ENCODE measurements at regions of chr21 and their contacts with region 1.

Region 1: DNA sequence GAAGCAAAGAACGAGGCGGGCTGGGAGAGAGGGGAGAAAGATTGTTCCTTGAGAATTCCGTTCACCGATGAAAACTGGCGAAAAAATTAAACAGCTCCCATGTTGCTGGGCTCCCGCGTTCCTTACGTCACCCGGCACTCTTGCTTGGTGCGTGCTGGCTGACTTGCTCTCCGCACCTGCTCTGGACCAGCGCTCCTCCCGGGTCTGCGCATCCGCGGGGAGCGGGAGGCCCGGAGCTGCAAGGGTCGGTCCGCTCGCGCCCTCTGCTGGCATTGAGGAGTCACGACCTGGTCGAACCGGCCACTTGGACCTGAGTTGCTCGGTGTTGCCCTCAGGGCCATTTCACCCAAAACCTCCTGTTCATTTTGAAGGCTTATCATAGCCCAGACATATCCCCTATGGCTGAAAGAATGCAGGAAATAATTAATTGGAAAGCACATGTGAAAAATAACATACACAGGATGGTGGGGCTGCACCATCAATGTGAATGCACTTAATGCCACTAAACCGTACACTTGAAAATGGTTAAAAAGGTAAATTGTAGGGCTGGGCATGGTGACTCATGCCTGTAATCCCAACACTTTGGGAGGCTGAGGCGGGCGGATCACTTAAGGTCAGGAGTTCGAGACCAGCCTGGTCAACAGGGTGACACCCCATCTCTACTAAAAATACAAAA is 98.9 kb upstream of the BACE2 start:
- DNase-seq: peak; percentile 80 to 85 (median 83)
- ATAC-seq: peak; percentile 86
- H3K4me3 ChIP-seq: no peak overlapping the region
- H3K27ac ChIP-seq: no peak overlapping the region
- H3K4me1 ChIP-seq: peaks cover 7% of the 10 kb centered on the region
- H3K27me3 ChIP-seq: no peaks in the 10 kb centered on the region
- CTCF ChIP-seq: peak; percentile 65 to 85 (median 84)
- POLR2A ChIP-seq: no peak

Region 2: GRCh38 chr21:40143822-40144525 is 925.1 kb before region 1 on chr21:
- intact Hi-C with region 1: loop called (anchors 5 kb)
- DNase-seq: peak; percentile 59 to 73 (median 65)
- ATAC-seq: no peak
- H3K4me3 ChIP-seq: no peak overlapping the region
- H3K27ac ChIP-seq: no peak overlapping the region
- H3K4me1 ChIP-seq: no peaks in the 10 kb centered on the region
- H3K27me3 ChIP-seq: no peaks in the 10 kb centered on the region
- CTCF ChIP-seq: peak; percentile 69 to 86 (median 77)
- POLR2A ChIP-seq: no peak

Region 3: GRCh38 chr21:40466893-40467501 is 602.1 kb before region 1 on chr21:
- intact Hi-C with region 1: loop called (anchors 10 kb)
- DNase-seq: peak in 3 of 4 donors; percentile 14 to 43 (median 17)
- ATAC-seq: no peak
- H3K4me3 ChIP-seq: no peak overlapping the region
- H3K27ac ChIP-seq: no peak overlapping the region
- H3K4me1 ChIP-seq: no peaks in the 10 kb centered on the region
- H3K27me3 ChIP-seq: no peaks in the 10 kb centered on the region
- CTCF ChIP-seq: peak; percentile 6 to 70 (median 48)
- POLR2A ChIP-seq: no peak

Region 4: DNA sequence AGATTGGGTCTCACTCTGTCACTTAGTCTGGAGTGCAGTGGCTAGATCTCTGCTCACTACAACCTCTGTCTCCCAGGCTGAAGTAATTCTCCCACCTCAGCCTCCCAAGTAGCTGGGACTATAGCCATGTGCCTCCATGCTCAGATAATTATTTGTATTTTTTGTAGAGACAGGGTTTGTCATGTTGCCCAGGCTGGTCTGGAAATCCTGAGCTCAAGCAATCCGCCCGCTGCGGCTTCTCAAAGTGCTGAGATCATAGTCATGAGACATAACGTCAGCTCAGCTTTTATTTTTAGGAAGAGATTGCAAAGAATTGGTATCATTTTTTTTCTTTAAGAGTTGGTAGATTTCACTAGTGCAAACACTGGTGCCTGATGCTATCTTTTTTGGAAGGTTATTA is 467.0 kb before region 1 on chr21:
- intact Hi-C with region 1: no loop called
- DNase-seq: peak in 1 of 4 donors; percentile 8
- ATAC-seq: no peak
- H3K4me3 ChIP-seq: no peak overlapping the region
- H3K27ac ChIP-seq: no peak overlapping the region
- H3K4me1 ChIP-seq: no peaks in the 10 kb centered on the region
- H3K27me3 ChIP-seq: no peaks in the 10 kb centered on the region
- CTCF ChIP-seq: no peak
- POLR2A ChIP-seq: no peak

Region 5: GRCh38 chr21:40647706-40648105 is 421.4 kb before region 1 on chr21:
- intact Hi-C with region 1: no loop called
- DNase-seq: no peak
- ATAC-seq: no peak
- H3K4me3 ChIP-seq: no peak overlapping the region
- H3K27ac ChIP-seq: no peak overlapping the region
- H3K4me1 ChIP-seq: no peaks in the 10 kb centered on the region
- H3K27me3 ChIP-seq: no peaks in the 10 kb centered on the region
- CTCF ChIP-seq: no peak
- POLR2A ChIP-seq: no peak

Region 6: GRCh38 chr21:40967771-40968170 is 101.3 kb before region 1 on chr21:
- intact Hi-C with region 1: no loop called
- DNase-seq: no peak
- ATAC-seq: no peak
- H3K4me3 ChIP-seq: no peak overlapping the region
- H3K27ac ChIP-seq: no peak overlapping the region
- H3K4me1 ChIP-seq: no peaks in the 10 kb centered on the region
- H3K27me3 ChIP-seq: no peaks in the 10 kb centered on the region
- CTCF ChIP-seq: no peak
- POLR2A ChIP-seq: no peak